ENCODE measurements at regions of chr17 and their contacts with region 1.

Region 1: GRCh38 chr17:42527273-42527703 is 8.8 kb upstream of the NAGLU start:
- DNase-seq: peak; percentile 62 to 69 (median 67)
- H3K4me3 ChIP-seq: no peak overlapping the region
- H3K4me3 Mint-ChIP-seq: peak overlapping the region in 2 of 8 donors; percentile 40 to 49
- H3K27ac ChIP-seq: no peak overlapping the region
- H3K27ac Mint-ChIP-seq: peak overlapping the region in 3 of 7 donors; percentile 2 to 13 (median 6)
- H3K4me1 ChIP-seq: peaks cover 29% of the 10 kb centered on the region
- H3K4me1 Mint-ChIP-seq: peaks cover 17 to 44% (median 29%) of the 10 kb centered on the region in 4 donors
- H3K27me3 ChIP-seq: no peaks in the 10 kb centered on the region
- H3K27me3 Mint-ChIP-seq: no peaks in the 10 kb centered on the region

Region 2: GRCh38 chr17:42428141-42428944 is 98.9 kb before region 1 on chr17:
- CTCF ChIA-PET with region 1: interaction called, 86 read pairs
- POLR2A ChIA-PET with region 1: no interaction called
- intact Hi-C with region 1: loop called (anchors 1 kb)
- DNase-seq: peak in 4 of 5 donors; percentile 49 to 58 (median 52)
- H3K4me3 ChIP-seq: no peak overlapping the region
- H3K4me3 Mint-ChIP-seq: no peak overlapping the region
- H3K27ac ChIP-seq: no peak overlapping the region
- H3K27ac Mint-ChIP-seq: no peak overlapping the region
- H3K4me1 ChIP-seq: peaks cover 6% of the 10 kb centered on the region
- H3K4me1 Mint-ChIP-seq: peaks cover 0 to 4% (median 1%) of the 10 kb centered on the region in 4 donors
- H3K27me3 ChIP-seq: peaks cover 6% of the 10 kb centered on the region
- H3K27me3 Mint-ChIP-seq: peaks cover 6 to 19% of the 10 kb centered on the region in 2 donors

Measured in CD4-positive, alpha-beta memory T cell (primary cell).